ENCODE measurements at regions of chr6 and their contacts with region 1.

Region 1: DNA sequence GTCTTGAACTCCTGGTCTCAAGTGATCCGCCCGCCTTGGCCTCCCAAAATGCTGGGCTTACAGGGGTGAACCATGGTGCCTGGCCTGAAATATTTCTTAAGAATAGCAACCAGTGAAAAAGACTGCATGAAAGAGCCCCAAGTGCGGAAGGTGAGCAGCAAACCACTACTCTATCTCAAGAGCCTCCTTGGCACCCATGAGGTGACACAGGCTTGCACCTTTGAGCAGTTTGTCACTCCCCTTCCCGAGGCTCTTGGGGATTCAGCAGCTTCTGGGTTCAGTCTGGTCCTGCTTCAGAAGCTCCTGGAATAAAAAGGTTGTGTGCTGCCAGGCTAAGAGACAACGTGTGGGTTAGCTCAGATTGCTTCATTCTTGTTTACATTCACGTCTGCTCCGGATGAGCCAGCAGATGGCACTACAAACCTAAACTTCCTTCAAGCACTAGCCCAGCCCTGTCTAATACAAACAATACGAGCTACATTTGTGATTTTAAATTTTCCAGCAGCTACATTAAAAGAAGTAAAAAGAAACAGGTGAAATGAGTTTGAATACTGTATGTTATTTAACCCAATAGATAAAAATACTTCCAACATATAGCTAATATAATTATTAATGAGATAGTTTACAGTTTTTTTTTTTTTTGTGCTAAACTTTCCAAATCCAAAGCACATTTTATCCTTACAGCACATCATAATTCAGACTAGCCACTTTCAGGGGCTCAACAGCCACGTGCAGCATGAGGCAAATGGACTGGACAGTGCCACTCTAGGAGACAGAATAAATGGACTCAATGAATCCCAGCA is 46.2 kb downstream of the GJA10 start:
- DNase-seq: no peak

Region 2: DNA sequence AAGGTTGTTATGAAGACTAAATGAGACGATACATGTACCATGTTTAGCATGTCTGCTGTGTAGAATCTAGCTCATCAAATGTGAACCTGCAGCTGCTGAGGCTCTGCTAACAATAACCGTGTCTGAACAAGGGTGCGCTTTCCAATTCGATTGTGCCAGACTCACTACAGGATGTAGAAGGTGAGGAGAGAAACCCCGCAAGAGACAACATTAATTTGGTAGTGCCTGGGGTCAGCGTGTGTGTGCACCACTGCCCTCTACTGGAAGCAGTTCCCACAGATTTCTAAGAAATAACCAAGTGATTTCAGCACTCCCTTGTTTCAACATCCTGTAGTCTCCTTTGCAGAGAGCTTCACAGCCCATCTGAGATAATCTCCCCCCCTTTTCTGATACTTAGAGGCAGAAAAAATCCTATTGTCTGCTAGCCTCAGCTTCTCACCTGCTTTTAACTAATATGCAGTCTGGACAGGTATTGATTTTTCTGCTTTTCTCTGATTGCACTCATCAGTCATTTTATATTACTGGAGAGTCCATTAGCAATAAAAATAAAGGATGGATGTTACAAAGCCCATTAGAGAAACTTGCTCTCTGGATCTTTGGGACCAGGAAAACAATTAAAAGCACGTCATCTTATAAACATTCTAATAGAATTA is 452.9 kb after region 1 on chr6:
- intact Hi-C with region 1: loop called (anchors 5 kb)
- DNase-seq: no peak

Measured in cardiac septum (tissue), 1 donor.